WTC11 (cell line): ENCODE measurements at regions of chr6 and their contacts with region 1.

Region 1: GRCh38 chr6:34027445-34027936 is 118.4 kb downstream of the GRM4 start:
- DNase-seq: peak; percentile 85
- ATAC-seq: peak; percentile 85
- H3K4me3 Mint-ChIP-seq: no peak overlapping the region
- H3K27ac Mint-ChIP-seq: no peak overlapping the region
- H3K4me1 Mint-ChIP-seq: no peaks in the 10 kb centered on the region
- H3K27me3 Mint-ChIP-seq: no peaks in the 10 kb centered on the region
- CTCF ChIP-seq: peak; percentile 86

Region 2: DNA sequence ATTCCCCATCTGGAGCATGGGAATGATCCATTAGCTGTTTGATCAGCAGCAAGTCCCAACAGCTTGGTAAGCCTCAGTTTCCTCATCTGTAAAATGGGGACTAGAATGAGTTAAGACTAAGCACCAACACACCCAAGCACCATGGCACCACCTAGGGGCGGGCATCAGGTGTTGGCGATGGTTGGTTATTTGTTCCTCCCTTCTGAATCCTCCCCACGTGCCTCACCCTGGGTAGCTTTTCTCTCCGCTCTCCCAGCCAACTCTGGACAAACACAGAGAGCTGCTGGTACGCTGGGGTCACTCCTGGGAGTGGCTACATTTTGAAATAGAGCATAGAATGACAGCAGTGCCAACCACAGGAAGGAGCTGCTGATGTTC is 419.7 kb before region 1 on chr6:
- CTCF ChIA-PET with region 1: no interaction called
- POLR2A ChIA-PET with region 1: no interaction called
- DNase-seq: no peak
- ATAC-seq: no peak
- H3K4me3 Mint-ChIP-seq: no peak overlapping the region
- H3K27ac Mint-ChIP-seq: no peak overlapping the region
- H3K4me1 Mint-ChIP-seq: peaks cover 45% of the 10 kb centered on the region
- H3K27me3 Mint-ChIP-seq: no peaks in the 10 kb centered on the region; the same call in 1 of the 2 replicates
- CTCF ChIP-seq: no peak

Region 3: DNA sequence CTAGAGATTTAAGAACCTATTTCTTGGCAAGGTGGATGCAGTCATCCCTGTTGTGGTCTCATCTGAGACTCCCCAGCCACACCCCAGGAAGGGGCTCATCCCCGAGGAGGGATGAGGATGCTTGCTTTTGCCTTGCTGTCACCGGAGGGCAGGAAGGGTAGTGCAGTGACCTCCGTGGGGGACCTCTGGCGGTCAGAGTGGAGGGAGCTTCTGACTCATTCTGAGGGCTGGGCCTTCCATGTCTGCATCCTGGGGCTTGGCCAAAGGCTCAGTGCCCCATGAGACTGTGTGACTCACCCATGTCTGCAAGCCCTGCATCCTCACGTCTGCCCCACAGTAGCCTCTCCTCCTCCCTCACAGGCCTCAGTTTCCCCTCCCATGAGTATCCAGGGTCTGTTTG is 354.7 kb before region 1 on chr6:
- CTCF ChIA-PET with region 1: no interaction called
- POLR2A ChIA-PET with region 1: no interaction called
- DNase-seq: peak; percentile 35
- ATAC-seq: peak; percentile 60
- H3K4me3 Mint-ChIP-seq: no peak overlapping the region
- H3K27ac Mint-ChIP-seq: no peak overlapping the region
- H3K4me1 Mint-ChIP-seq: no peaks in the 10 kb centered on the region
- H3K27me3 Mint-ChIP-seq: no peaks in the 10 kb centered on the region
- CTCF ChIP-seq: no peak

Region 4: DNA sequence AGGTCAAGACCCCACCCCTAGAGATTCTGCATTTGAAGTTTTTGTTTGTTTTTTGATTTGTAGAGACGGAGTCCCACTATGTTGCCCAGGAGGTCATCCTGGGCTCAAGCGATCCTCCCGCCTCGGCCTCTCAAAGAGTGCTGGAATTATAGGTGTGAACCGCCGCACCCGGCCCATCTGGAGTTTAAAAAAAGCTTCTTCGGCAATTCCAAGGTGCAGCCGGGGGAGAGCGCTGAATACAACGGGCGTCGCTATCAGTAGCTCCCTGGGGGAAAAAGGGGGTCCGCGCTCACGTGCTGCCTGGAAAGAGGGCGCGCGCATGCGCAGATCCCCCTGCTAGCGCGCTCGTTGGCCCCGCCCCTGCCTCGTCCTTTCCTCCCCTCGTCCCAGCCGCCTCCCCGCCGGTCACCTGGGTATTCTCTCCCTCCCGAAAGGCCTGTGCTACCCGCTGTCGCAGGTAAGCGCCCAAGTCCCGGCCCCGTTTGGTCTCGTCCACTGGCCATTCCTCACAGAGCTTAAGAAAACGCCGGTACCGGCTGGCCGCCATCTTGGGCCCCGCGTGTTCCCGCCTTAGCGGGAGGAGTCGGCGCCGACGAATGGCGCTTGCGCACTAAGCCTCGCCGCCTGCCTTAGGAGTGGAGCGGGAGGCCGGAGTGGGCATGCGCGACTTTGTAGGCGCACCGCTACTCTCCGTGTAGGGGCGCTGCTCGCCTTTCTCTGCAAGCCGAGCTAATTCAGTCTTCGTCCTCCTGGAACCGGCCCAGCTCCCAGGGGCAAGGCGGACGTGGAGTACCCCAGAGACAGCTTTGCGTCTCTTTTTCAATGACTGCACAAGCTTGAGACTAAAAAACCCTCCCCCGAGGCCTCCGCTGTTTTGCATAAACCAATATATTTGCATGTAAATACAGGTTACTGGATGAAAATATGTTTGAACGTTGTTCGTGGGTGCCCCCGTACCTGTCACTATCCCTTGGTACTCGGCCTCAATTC is 316.1 kb before region 1 on chr6 and contains the start of gene UQCC2:
- CTCF ChIA-PET with region 1: interaction called, 13 read pairs
- POLR2A ChIA-PET with region 1: no interaction called
- DNase-seq: peak; percentile 96
- ATAC-seq: peak; percentile 96
- H3K4me3 Mint-ChIP-seq: peak within 1 kb of the TSS; percentile 82
- H3K27ac Mint-ChIP-seq: peak within 1 kb of the TSS; percentile 94
- H3K4me1 Mint-ChIP-seq: peaks cover 33% of the 10 kb centered on the region
- H3K27me3 Mint-ChIP-seq: no peaks in the 10 kb centered on the region; the same call in 1 of the 2 replicates
- CTCF ChIP-seq: no peak
- total RNA-seq, gene UQCC2: 65.8 to 105 TPM (median 95.3 TPM) in 3 replicates

Region 5: DNA sequence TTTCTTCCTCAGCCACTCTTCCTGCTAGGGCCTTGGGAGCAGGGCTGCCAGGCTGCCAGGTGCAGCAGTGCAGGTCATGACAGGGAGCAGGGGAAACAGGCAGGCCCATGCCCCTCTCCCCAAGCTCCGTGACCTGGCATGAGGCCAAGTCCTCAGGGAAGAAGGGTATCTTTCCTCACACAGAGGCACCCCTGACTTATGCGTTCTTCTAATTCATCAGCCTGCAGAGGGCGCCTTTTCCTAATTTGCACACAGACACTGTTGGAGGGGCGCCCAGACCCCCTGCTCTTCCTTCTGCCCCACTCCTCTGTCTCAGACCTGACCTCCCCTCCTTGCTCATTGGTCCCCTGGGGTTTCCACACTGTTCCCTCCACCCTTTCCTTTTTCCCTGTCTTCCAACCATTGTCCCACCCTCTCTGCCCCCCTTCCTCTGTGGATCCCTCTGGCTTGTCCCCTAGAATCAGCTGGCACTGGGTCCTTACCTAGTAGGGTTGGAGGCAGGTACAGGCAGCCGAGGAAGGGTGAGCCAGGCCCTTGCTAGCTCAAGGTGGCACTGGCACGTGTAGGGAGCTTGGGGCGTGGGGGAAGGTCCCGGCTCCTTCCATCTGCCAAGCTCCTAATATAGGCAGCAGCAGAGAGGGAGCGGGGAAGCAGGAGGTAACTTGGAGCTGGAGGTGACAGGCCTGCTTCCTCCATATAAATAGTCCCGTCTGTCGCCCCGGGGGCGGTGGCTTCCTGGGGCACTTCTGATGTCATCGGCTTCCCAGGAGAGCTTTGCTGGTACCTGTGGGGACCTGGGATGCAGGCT is 68.8 kb before region 1 on chr6:
- CTCF ChIA-PET with region 1: interaction called, 68 read pairs
- POLR2A ChIA-PET with region 1: interaction called, 3 read pairs
- DNase-seq: peak; percentile 75
- ATAC-seq: peak; percentile 74
- H3K4me3 Mint-ChIP-seq: no peak overlapping the region
- H3K27ac Mint-ChIP-seq: no peak overlapping the region
- H3K4me1 Mint-ChIP-seq: peaks cover 24% of the 10 kb centered on the region
- H3K27me3 Mint-ChIP-seq: peaks cover 3% of the 10 kb centered on the region
- CTCF ChIP-seq: peak; percentile 57

Region 6: GRCh38 chr6:33975661-33976385 is 51.7 kb before region 1 on chr6:
- CTCF ChIA-PET with region 1: interaction called, 24 read pairs
- POLR2A ChIA-PET with region 1: no interaction called
- DNase-seq: peak; percentile 51
- ATAC-seq: peak; percentile 69
- H3K4me3 Mint-ChIP-seq: peak overlapping the region; percentile 68
- H3K27ac Mint-ChIP-seq: no peak overlapping the region
- H3K4me1 Mint-ChIP-seq: peaks cover 5% of the 10 kb centered on the region
- H3K27me3 Mint-ChIP-seq: peaks cover 52% of the 10 kb centered on the region
- CTCF ChIP-seq: no peak

Region 7: DNA sequence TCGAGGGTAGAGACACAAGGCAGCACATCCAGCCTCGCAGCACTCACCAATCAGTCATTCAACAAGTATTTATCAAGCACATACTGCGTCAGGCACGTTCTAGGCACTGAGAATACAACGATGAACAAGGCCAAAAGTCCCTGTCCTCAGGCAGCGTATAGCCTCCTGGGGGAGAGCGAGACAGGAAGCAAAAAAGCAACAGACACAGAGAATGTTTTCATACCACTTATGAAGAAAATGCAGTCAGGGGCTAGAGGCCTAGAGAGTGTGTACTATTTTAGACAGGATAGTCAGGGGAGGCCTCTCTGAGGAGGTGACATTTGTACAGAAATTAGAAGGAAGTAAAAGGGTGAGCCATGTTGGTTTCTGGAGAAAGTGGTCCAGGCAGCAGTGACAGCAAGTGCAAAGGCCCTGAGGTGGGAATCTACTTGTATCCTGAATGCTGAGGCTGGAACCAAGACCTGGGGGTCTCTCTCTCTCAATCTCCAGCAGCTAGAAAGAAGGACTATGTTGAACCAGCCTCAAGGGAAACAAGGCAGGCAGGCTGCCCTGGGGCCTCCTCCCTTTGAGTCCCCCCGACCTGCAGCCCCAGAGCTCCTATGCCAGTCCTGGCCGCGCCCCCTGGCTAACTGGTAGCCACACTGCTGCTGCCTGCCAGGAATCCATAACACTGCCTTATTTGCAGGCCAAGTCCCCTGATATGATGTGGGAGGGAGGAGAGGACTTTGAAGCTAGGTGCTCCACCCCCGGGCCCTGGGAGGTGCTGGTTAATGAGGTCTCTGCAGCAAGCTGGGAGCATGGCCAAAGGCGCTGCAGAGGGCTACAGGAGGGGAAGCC is 32.8 kb before region 1 on chr6:
- CTCF ChIA-PET with region 1: interaction called, 12 read pairs
- POLR2A ChIA-PET with region 1: no interaction called
- DNase-seq: no peak
- ATAC-seq: no peak
- H3K4me3 Mint-ChIP-seq: no peak overlapping the region
- H3K27ac Mint-ChIP-seq: no peak overlapping the region
- H3K4me1 Mint-ChIP-seq: peaks cover 11% of the 10 kb centered on the region
- H3K27me3 Mint-ChIP-seq: peaks cover 77% of the 10 kb centered on the region
- CTCF ChIP-seq: no peak

Region 8: GRCh38 chr6:34044945-34045595 is 17.6 kb after region 1 on chr6:
- CTCF ChIA-PET with region 1: interaction called, 12 read pairs
- POLR2A ChIA-PET with region 1: no interaction called
- DNase-seq: no peak
- ATAC-seq: no peak
- H3K4me3 Mint-ChIP-seq: no peak overlapping the region
- H3K27ac Mint-ChIP-seq: no peak overlapping the region
- H3K4me1 Mint-ChIP-seq: peaks cover 22% of the 10 kb centered on the region
- H3K27me3 Mint-ChIP-seq: no peaks in the 10 kb centered on the region
- CTCF ChIP-seq: no peak

Region 9: DNA sequence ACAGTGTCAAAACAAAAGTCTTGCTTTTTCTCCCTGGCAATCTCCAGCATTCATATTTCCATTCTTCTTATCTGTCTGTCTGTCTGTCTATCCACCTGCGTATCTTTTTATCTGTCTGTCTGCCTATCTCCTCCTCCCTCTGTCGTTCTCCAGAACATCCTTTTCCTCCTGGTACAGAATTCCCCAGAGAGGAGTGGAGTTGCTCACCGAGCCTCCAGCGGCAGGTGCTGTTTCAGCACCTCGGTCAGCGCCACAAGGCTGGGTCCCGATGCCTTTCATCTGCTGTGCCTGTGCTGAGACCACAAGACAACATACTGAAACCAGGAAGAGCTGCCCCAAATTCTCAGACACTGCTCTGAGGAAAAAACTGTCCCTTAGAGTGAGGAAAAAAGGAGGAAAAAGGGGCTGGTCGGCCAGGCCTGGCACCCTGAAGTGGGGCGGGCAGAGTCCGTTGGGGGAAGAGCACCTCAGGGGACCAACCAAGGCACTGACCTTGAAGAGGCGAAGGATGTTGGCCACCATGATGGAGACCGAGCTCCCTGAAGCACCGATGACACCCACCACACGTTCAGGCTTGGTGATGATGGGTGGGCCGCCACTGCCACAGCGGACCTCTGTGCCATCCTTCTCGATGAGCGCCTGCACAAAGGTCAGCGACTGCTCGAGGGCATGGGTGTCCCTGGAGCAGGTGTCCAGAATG is 105.1 kb after region 1 on chr6:
- CTCF ChIA-PET with region 1: interaction called, 12 read pairs
- POLR2A ChIA-PET with region 1: no interaction called
- DNase-seq: peak; percentile 89
- ATAC-seq: peak; percentile 29
- H3K4me3 Mint-ChIP-seq: peak overlapping the region; percentile 64
- H3K27ac Mint-ChIP-seq: peak overlapping the region; percentile 96
- H3K4me1 Mint-ChIP-seq: peaks cover 86% of the 10 kb centered on the region
- H3K27me3 Mint-ChIP-seq: no peaks in the 10 kb centered on the region
- CTCF ChIP-seq: no peak

Region 10: DNA sequence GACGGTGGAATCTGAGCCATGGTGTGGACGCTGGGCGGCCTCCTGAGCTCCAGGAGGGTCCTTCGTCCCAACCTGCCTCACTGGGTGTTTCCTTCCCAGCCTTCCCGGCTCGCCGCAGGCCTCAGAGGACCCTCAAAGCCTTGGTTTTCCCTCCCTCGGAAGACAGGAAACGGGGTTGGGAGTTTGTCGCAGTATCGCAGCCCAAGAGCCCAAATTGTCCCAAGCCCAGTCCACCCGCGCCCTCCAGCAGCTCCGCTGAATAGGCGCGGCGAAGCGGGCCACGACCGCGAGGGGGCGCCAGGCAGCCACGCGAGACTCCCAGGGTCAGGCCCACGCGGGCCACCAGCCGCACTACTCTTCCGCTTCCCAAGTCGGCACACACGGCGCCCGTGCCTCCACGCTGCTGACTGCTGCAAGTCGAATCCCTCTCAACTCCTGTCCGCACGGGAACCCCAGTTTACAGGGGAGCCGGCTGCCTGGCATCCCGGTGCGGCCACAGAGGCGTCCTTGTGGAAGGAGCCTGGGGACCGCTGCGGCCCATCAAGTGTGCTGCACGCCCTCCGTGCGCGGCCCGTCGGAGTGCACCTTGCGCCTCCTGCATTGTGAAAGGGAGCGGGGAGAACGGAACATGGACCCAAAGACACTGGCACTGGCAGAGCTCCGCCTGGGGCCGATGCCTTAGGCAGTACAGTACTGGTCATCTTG is 168.8 kb after region 1 on chr6:
- CTCF ChIA-PET with region 1: no interaction called
- POLR2A ChIA-PET with region 1: no interaction called
- DNase-seq: peak; percentile 81
- ATAC-seq: peak; percentile 64
- H3K4me3 Mint-ChIP-seq: peak overlapping the region; percentile 65
- H3K27ac Mint-ChIP-seq: no peak overlapping the region
- H3K4me1 Mint-ChIP-seq: peaks cover 28% of the 10 kb centered on the region
- H3K27me3 Mint-ChIP-seq: peaks cover 4% of the 10 kb centered on the region
- CTCF ChIP-seq: peak; percentile 81